Activated CD4-positive, alpha-beta T cell treated with anti-CD3 and anti-CD28 coated beads for 36 hours (primary cell): ENCODE measurements at regions of chr22 and their contacts with region 1.

Region 1: GRCh38 chr22:37566903-37567820 is 6.9 kb downstream of the CDC42EP1 start:
- DNase-seq: peak; percentile 96
- ATAC-seq: peak; percentile 93
- H3K4me3 Mint-ChIP-seq: peak overlapping the region; percentile 43
- H3K27ac Mint-ChIP-seq: peak overlapping the region; percentile 87
- H3K4me1 Mint-ChIP-seq: peaks cover 23% of the 10 kb centered on the region
- H3K27me3 Mint-ChIP-seq: peaks cover 19% of the 10 kb centered on the region

Region 2: DNA sequence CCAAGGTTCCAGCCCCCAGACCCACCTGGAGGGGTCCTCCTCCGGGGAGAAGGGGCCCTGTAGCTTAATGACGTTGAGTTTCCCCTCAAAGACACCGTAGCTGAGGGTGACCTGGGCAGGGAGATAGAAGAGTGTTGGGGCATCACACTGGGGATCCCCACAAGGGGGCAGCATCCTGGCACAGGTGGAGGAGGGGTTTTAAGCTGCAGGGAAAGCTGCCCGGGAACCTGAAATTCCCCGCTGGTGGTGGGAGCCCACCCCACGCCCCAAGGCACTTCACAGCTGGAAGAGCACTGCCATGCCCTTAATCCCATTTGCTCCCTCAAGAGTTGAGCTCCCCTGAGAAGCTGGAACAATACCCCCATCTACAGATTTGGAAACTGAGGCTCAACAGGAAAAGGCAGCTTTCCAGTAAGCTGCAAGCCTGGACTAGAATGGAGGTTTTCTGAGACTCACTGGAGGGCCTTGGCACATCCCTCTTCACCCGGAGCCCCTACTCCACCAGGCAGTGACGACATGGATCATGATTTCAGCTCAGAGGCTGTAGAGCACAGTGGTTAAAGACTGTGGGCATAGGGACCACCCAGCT is 94.7 kb before region 1 on chr22:
- CTCF ChIA-PET with region 1: interaction called, 16 read pairs
- POLR2A ChIA-PET with region 1: no interaction called
- intact Hi-C with region 1: no loop called
- DNase-seq: peak; percentile 67
- ATAC-seq: no peak
- H3K4me3 Mint-ChIP-seq: no peak overlapping the region
- H3K27ac Mint-ChIP-seq: no peak overlapping the region
- H3K4me1 Mint-ChIP-seq: no peaks in the 10 kb centered on the region
- H3K27me3 Mint-ChIP-seq: no peaks in the 10 kb centered on the region

Region 3: DNA sequence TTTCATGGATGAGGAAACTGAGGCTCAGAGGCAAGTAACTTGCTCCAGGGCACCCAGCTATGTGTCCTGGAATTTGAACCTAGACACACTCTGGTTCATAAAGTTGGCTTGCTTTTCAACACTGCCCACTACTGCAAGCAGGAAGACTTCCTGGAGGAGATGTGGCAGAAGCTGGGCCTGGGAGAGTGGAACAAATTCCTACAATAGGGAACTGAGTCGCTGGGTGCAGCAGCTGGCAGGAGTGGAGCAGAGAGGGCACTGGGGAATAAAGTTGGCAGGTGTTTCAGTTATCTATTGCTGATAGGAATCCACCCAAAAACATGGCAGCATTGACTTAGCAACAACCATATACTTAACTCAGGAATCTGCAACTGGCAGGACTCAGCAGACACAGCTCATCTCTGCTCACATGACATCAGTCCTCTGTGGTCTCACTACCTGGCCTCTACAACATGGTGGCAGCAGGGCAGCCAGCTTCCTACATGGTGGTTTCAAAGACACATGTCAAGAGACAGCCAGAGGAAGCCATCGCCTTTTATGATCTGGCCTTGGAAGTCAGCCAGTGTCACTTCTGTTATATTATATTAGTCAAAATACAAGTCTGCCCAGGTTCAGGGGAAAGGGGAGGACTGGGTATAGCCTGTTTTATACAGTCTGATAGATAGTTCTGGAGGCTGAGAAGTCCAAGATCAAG is 37.4 kb before region 1 on chr22:
- CTCF ChIA-PET with region 1: interaction called, 12 read pairs
- POLR2A ChIA-PET with region 1: no interaction called
- intact Hi-C with region 1: no loop called
- DNase-seq: peak; percentile 27
- ATAC-seq: peak; percentile 46
- H3K4me3 Mint-ChIP-seq: no peak overlapping the region
- H3K27ac Mint-ChIP-seq: no peak overlapping the region
- H3K4me1 Mint-ChIP-seq: peaks cover 21% of the 10 kb centered on the region
- H3K27me3 Mint-ChIP-seq: peaks cover 3% of the 10 kb centered on the region

Region 4: DNA sequence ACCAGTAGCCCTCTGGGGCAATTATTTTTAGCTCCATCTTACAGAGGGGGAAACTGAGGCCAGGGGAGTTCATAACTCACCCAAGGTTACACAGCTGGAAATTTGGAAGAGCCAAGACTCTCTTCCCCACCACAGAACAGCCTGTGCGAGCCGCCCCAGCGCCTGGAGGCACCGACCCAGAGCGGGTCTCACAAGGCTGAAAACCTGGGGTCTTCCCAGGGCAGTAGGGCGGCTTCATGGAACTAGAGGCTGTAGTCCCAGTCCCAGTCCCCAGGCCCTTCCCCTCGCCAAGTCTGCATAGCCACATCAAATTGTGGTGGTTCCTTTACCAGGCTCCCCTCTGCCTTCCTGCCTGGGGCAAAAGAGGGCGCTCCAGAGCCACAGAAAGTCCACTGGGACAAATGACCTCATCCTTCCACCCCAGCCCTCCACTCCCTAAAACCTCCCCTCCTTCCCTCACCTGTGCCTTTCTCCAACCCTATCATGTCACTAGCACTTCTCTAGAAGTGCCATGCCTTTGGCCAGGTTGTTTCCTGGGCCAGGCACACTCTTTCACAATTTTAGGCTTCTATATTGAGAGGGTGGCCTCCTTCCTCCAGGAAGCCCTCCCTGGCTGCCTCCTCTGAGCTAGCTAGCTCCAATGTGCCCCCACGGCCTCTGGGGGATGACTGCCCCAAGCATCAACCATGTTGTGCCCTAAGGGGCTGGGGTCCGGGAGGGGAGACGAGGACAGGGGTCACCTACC is 22.0 kb before region 1 on chr22:
- CTCF ChIA-PET with region 1: interaction called, 302 read pairs
- POLR2A ChIA-PET with region 1: interaction called, 16 read pairs
- intact Hi-C with region 1: loop called (anchors 1 kb)
- DNase-seq: peak; percentile 84
- ATAC-seq: peak; percentile 54
- H3K4me3 Mint-ChIP-seq: no peak overlapping the region
- H3K27ac Mint-ChIP-seq: no peak overlapping the region
- H3K4me1 Mint-ChIP-seq: peaks cover 26% of the 10 kb centered on the region
- H3K27me3 Mint-ChIP-seq: peaks cover 8% of the 10 kb centered on the region

Region 5: GRCh38 chr22:37581504-37581903 is 14.3 kb after region 1 on chr22:
- CTCF ChIA-PET with region 1: interaction called, 32 read pairs
- POLR2A ChIA-PET with region 1: interaction called, 3 read pairs
- intact Hi-C with region 1: no loop called
- DNase-seq: no peak
- ATAC-seq: no peak
- H3K4me3 Mint-ChIP-seq: no peak overlapping the region
- H3K27ac Mint-ChIP-seq: no peak overlapping the region
- H3K4me1 Mint-ChIP-seq: peaks cover 12% of the 10 kb centered on the region
- H3K27me3 Mint-ChIP-seq: no peaks in the 10 kb centered on the region